ENCODE measurements at regions of chr6 and their contacts with region 1.

Region 1: DNA sequence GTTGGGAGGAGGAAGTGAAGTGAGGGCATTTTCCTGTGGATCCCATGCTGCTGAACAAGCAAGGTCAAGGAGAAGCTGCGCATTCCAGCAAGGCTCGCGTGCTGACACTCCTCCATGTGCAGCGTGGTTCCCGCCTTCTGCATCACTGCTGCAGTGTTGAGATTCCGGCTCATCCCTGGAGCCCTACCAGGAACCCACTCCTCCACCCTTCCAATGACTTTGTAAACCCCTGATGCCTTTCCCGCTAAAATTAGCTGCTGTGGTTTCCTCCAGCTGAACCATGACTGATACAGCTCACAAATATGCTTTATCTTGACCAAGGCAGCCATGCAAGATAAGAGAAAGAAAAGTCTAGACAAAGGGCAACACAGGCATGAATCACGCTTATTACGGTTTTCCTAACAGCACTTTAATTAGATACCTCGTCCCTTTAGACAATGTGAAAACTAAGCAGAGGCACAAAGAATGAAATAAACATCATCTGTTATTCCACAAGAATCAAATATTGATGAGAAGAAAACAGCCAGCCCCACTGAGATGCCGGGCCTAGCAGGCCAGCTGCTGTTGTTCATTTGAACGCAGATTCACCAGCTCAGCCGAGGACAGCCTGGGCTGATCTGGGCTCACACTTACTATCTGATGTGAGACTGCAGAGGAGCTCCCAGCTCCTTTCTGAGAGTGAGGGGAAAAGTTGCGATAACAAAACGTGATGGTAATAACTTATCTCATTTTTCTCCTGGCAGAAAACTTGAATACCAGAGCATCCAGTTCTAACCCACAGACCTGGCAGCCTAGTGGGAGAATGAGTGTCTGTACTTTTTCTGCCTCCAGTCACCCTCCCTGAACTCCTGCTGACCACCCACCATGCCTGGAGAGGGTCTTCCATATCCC is 14.2 kb upstream of the BNIP5 start:
- DNase-seq: no peak
- ATAC-seq: no peak
- H3K4me3 ChIP-seq: no peak overlapping the region
- H3K4me3 Mint-ChIP-seq: no peak overlapping the region
- H3K27ac ChIP-seq: no peak overlapping the region
- H3K27ac Mint-ChIP-seq: no peak overlapping the region
- H3K4me1 ChIP-seq: no peaks in the 10 kb centered on the region
- H3K4me1 Mint-ChIP-seq: peaks cover 2% of the 10 kb centered on the region
- H3K27me3 ChIP-seq: no peaks in the 10 kb centered on the region
- H3K27me3 Mint-ChIP-seq: peaks cover 3% of the 10 kb centered on the region
- CTCF ChIP-seq: no peak

Region 2: DNA sequence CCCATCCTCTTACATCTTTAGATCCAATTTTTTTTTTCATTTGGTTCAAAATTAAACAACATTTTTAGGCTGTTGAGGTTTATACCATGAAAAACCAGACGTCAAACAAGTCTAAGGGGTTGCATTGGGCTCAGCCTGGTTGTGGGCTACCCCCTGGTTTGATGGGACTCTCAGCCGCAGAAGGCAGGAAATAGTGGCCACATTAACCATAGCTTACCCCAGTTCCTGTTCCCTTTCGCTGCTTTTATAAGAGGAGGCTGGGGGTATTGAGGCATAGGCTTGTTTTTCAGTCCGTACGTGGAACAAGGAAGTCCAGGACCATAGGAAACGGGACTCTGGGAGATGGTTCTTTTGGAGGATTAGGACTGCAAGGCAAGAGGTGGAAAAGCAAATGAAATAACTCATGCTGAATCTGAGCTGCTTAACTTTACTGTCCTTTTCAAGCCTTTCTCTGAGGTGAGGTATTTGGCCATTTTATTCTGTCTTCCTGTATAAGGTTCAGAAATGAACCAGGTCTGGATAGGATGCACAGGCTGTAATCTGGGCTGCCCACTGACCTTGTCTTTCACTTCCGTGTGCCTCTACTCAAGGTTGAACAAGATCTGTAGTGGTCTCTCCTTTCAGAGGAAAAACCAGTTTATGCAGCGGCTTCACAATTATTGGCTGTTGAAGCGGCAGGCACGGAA is 146.7 kb before region 1 on chr6:
- CTCF ChIA-PET with region 1: no interaction called
- POLR2A ChIA-PET with region 1: no interaction called
- intact Hi-C with region 1: loop called in 1 of 2 experiments (anchors 10 kb)
- DNase-seq: peak; percentile 27 to 90 (median 59)
- ATAC-seq: peak; percentile 97
- H3K4me3 ChIP-seq: peak overlapping the region in 1 of 2 experiments; percentile 9
- H3K4me3 Mint-ChIP-seq: peak overlapping the region; percentile 74
- H3K27ac ChIP-seq: no peak overlapping the region
- H3K27ac Mint-ChIP-seq: peak overlapping the region; percentile 63
- H3K4me1 ChIP-seq: peaks cover 55% of the 10 kb centered on the region
- H3K4me1 Mint-ChIP-seq: peaks cover 72% of the 10 kb centered on the region
- H3K27me3 ChIP-seq: no peaks in the 10 kb centered on the region
- H3K27me3 Mint-ChIP-seq: no peaks in the 10 kb centered on the region
- CTCF ChIP-seq: no peak

Region 3: GRCh38 chr6:37222125-37222967 is 871.4 kb after region 1 on chr6:
- CTCF ChIA-PET with region 1: no interaction called
- POLR2A ChIA-PET with region 1: no interaction called
- intact Hi-C with region 1: no loop called
- DNase-seq: peak; percentile 27 to 81 (median 67)
- ATAC-seq: peak; percentile 93
- H3K4me3 ChIP-seq: peak overlapping the region; percentile 71 to 75
- H3K4me3 Mint-ChIP-seq: peak overlapping the region; percentile 85
- H3K27ac ChIP-seq: no peak overlapping the region
- H3K27ac Mint-ChIP-seq: peak overlapping the region; percentile 60
- H3K4me1 ChIP-seq: peaks cover 9% of the 10 kb centered on the region
- H3K4me1 Mint-ChIP-seq: peaks cover 12% of the 10 kb centered on the region
- H3K27me3 ChIP-seq: no peaks in the 10 kb centered on the region
- H3K27me3 Mint-ChIP-seq: no peaks in the 10 kb centered on the region
- CTCF ChIP-seq: no peak

Measured in CD8-positive, alpha-beta T cell (primary cell).